ENCODE measurements at regions of chr11 and their contacts with region 1.

Region 1: GRCh38 chr11:60906132-60906972 is at the start of gene PRPF19:
- DNase-seq: peak; percentile 98
- H3K4me3 ChIP-seq: peak within 1 kb of the TSS; percentile 94
- H3K27ac ChIP-seq: peak within 1 kb of the TSS; percentile 87
- H3K4me1 ChIP-seq: peaks cover 43% of the 10 kb centered on the region
- CTCF ChIP-seq: no peak
- total RNA-seq, gene PRPF19: 95.2 and 120 TPM in 2 replicates

Region 2: DNA sequence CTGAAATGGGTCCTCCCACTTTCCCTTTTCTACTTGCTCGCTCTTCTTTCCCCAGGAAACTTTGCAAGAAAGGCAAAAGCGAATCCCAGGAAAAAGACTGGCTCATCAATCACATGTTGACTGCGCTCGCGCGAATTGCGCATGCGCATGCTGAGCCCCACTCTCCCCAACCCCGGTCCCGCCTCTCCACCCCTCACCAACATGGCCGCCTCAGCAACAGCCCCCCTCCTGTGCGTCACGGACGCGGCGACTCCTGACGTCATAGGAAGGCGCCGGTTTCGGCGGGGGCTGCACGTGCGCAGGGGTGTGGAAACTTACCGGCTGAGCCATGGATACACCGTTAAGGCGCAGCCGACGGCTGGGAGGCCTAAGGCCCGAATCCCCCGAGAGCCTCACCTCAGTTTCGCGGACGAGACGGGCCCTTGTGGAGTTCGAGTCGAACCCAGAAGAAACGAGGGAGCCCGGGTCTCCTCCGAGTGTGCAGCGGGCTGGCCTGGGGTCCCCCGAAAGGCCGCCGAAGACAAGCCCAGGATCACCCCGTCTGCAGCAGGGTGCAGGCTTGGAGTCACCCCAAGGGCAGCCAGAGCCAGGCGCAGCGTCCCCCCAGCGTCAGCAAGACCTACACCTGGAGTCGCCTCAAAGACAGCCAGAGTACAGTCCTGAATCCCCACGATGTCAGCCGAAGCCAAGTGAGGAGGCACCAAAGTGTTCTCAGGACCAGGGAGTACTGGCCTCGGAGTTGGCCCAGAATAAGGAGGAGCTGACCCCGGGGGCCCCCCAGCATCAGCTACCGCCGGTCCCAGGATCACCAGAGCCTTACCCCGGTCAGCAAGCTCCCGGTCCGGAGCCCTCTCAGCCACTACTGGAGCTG is 64.3 kb before region 1 on chr11 and contains the start of gene CCDC86:
- CTCF ChIA-PET with region 1: no interaction called
- POLR2A ChIA-PET with region 1: interaction called, 5 read pairs
- intact Hi-C with region 1: loop called (anchors 1 kb)
- DNase-seq: peak; percentile 93
- H3K4me3 ChIP-seq: peak within 1 kb of the TSS; percentile 81
- H3K27ac ChIP-seq: peak within 1 kb of the TSS; percentile 29
- H3K4me1 ChIP-seq: peaks cover 23% of the 10 kb centered on the region
- CTCF ChIP-seq: no peak
- total RNA-seq, gene CCDC86: 21.3 and 21.7 TPM in 2 replicates

Region 3: DNA sequence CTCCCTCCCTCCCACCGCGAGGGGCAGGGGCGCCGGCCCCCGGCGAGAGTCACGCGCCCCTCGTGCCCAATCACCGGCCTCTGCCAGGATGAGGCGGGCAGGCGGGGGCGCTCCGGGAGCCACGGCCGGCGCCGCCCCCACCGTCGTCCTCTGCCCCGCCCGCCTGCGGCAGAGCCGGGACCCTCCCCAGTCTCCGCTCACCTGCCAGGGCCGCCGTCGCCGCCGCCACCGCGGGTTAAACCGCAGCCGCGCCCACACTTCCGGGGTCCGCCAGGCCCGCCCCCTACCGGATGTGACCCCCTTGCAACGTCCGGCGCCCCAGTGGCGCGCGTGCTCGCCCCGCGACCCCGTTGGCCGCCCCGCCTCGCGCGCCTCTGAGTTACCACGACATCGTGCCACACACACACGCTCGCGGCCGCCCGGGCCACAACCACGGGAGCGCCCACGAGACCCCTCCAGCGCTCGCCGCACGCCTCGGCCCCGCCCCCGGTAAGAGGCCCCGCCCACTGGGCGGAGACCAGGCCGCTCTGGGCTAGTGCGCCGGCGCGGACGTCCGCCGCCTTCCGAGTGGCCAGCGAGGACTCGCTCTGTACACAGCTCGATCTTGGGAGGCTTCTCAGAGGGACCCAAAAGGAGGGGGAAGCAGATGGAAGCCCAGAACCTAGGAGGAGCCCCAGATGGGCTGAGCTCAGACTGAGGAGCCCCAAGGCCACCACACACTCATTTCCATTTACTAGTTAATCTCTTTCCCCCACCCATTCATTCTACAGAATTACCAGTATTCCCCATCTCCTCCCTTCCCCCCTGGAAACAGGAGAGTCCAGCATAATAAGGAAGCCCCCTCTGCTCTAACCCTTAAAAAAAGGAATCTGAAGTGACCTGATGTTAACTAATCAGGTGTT is 255.1 kb after region 1 on chr11 and contains the start of gene VPS37C:
- CTCF ChIA-PET with region 1: no interaction called
- POLR2A ChIA-PET with region 1: no interaction called
- intact Hi-C with region 1: loop called (anchors 2 kb)
- DNase-seq: peak; percentile 92
- H3K4me3 ChIP-seq: peak within 1 kb of the TSS; percentile 85
- H3K27ac ChIP-seq: peak within 1 kb of the TSS; percentile 82
- H3K4me1 ChIP-seq: peaks cover 28% of the 10 kb centered on the region
- CTCF ChIP-seq: no peak
- total RNA-seq, gene VPS37C: 10.2 and 10.3 TPM in 2 replicates